Natural killer cell (primary cell): ENCODE measurements at regions of chr12 and their contacts with region 1.

Region 1: GRCh38 chr12:6688999-6689882 is at the start of gene ZNF384:
- DNase-seq: peak; percentile 89 to 98
- ATAC-seq: peak; percentile 76 to 93 (median 80)
- H3K4me3 ChIP-seq: peak within 1 kb of the TSS; percentile 63
- H3K4me3 Mint-ChIP-seq: peak within 1 kb of the TSS; percentile 92
- H3K27ac ChIP-seq: peak within 1 kb of the TSS; percentile 95
- H3K27ac Mint-ChIP-seq: peak within 1 kb of the TSS; percentile 93 to 96
- H3K4me1 ChIP-seq: peaks cover 22% of the 10 kb centered on the region
- H3K4me1 Mint-ChIP-seq: peaks cover 43 to 53% of the 10 kb centered on the region in 2 donors
- H3K27me3 ChIP-seq: no peaks in the 10 kb centered on the region
- H3K27me3 Mint-ChIP-seq: peaks cover 2 to 4% of the 10 kb centered on the region in 2 donors
- CTCF ChIP-seq: no peak
- total RNA-seq, gene ZNF384: 95.1 to 101 (median 100) TPM

Region 2: DNA sequence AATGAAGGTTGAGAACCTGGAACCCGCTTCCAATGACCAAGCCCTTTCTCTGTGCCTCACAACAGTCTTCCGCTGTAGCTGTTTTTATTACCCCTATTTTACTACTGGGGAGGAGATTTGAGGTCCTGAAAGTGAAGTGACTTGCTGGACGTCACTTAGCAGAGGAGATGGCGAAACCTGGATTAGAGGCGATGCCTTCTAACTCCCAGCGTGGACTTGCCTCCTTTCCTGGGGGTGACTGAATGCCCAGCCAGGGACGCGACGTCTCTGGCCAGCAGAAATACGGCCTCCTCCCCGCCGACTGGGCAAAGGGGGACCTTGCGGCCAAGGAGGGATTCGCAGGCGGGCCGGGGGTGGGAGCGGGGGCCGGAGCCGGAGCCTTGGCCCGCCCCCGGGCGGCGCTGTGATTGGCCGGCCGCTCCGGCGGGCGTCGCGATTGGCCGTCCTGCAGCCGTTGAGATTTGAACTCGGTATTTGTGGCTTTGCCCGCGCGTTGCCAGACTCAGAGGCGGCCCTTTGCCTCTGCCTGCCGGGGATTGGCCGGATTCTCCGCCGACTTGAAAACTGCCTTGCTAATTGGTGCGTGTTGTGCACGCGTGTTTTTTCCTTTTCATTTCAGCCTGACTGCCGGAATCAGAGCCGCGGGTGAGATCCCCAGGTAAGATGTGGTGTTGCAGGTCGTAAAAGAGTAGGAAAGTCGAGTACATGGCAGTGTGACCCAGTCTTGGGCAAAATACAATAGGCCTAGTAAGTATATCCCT is 195.6 kb before region 1 on chr12 and contains the start of gene NCAPD2:
- intact Hi-C with region 1: loop called (anchors 10 kb)
- DNase-seq: peak; percentile 90 to 97
- ATAC-seq: peak; percentile 85 to 94 (median 86)
- H3K4me3 ChIP-seq: peak within 1 kb of the TSS; percentile 81
- H3K4me3 Mint-ChIP-seq: peak within 1 kb of the TSS; percentile 94
- H3K27ac ChIP-seq: peak within 1 kb of the TSS; percentile 88
- H3K27ac Mint-ChIP-seq: peak within 1 kb of the TSS; percentile 97
- H3K4me1 ChIP-seq: peaks cover 22% of the 10 kb centered on the region
- H3K4me1 Mint-ChIP-seq: peaks cover 38% of the 10 kb centered on the region in 2 donors
- H3K27me3 ChIP-seq: no peaks in the 10 kb centered on the region
- H3K27me3 Mint-ChIP-seq: no peaks in the 10 kb centered on the region
- CTCF ChIP-seq: no peak
- total RNA-seq, gene NCAPD2: 38.8 to 53.1 (median 44.1) TPM

Region 3: DNA sequence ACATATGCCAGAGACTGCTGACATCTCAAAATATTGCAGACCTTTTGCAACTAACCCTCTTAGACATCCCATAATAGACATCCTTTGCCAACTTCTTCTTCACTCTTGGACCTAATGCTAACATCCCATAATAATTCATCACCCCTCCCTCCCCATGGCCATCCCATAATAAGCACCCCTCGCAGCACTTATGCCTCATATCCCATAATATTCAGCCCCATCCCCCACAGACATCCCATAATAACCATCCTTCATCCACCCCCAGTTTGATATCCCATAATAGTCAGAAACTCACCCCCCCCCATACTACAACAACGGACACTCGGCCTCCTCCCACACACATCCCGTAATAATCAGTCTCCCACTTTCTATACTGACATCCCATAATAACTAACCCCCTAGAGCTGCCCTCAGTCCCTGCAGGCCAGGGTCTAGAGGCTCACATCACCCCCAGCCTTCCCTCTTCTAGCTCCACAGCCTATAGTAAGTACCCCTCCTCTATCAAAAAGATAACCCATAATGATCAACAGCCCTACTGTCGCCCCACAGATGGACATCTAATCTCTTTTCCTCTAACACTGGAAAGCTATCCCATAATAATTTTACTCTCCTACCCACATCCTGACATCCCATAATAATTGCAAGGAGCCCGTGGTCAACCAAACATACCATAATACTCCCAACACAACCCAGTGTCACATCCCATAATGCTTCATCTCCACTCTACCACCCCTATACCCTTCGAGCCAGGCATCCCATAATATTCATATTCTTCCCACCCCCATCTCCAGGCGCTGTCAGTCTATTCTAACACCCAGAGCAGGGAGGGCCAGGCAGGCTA is 81.3 kb before region 1 on chr12:
- intact Hi-C with region 1: loop called (anchors 1 kb)
- DNase-seq: peak; percentile 49 to 87
- ATAC-seq: peak; percentile 43 to 69 (median 53)
- H3K4me3 ChIP-seq: no peak overlapping the region
- H3K4me3 Mint-ChIP-seq: no peak overlapping the region
- H3K27ac ChIP-seq: peak overlapping the region; percentile 97
- H3K27ac Mint-ChIP-seq: no peak overlapping the region
- H3K4me1 ChIP-seq: peaks cover 59% of the 10 kb centered on the region
- H3K4me1 Mint-ChIP-seq: peaks cover 40 to 53% of the 10 kb centered on the region in 2 donors
- H3K27me3 ChIP-seq: no peaks in the 10 kb centered on the region
- H3K27me3 Mint-ChIP-seq: no peaks in the 10 kb centered on the region
- CTCF ChIP-seq: no peak

Region 4: GRCh38 chr12:6632026-6632983 is 56.9 kb before region 1 on chr12:
- intact Hi-C with region 1: no loop called
- DNase-seq: peak; percentile 49 to 81
- ATAC-seq: peak; percentile 65 to 87 (median 76)
- H3K4me3 ChIP-seq: peak overlapping the region; percentile 24
- H3K4me3 Mint-ChIP-seq: peak overlapping the region; percentile 97
- H3K27ac ChIP-seq: peak overlapping the region; percentile 87
- H3K27ac Mint-ChIP-seq: peak overlapping the region; percentile 95 to 99
- H3K4me1 ChIP-seq: peaks cover 80% of the 10 kb centered on the region
- H3K4me1 Mint-ChIP-seq: peaks cover 62 to 69% of the 10 kb centered on the region in 2 donors
- H3K27me3 ChIP-seq: no peaks in the 10 kb centered on the region
- H3K27me3 Mint-ChIP-seq: no peaks in the 10 kb centered on the region
- CTCF ChIP-seq: no peak

Region 5: DNA sequence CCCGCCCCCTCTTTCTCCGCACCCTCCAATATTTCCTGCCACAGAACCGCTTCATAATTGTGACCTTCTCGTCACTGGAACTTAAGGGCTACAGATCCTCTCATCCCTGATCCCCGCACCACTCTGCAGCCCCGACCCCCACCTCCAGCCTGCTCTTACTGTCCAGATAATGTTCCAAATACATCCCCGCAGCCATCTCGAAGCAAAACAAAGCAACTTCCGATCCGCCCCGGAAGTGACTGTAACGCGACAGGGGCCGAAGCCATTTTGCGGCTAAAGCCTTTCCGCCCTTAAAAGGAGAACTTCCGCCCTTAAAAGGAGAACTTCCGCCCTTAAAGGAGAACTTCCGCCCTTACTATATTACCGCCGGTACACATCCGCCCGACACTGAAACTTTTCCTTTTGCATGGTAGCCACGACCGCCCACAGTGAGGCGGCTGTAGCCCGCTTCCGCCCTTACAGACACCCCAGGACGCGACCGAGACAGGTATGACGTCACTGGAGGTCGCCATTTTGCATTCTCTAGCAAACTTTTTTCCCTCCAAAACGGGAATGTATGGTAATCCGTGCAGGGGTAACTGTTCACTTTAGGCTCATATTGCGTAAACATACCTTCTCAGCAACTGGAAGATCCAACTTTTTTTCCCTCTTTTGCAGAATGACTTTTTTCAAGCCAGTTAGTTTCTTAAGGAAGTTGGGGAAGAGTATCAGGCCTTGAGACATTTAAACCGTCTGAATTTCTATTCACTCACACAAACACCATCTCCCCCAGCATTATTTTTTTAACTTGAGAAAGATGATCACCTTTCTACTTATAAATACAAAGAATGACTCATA is 26.1 kb before region 1 on chr12 and contains the start of gene ING4:
- intact Hi-C with region 1: loop called (anchors 1 kb)
- DNase-seq: peak; percentile 92 to 99
- ATAC-seq: peak; percentile 97 to 100 (median 98)
- H3K4me3 ChIP-seq: peak within 1 kb of the TSS; percentile 61
- H3K4me3 Mint-ChIP-seq: peak within 1 kb of the TSS; percentile 96
- H3K27ac ChIP-seq: peak within 1 kb of the TSS; percentile 86
- H3K27ac Mint-ChIP-seq: peak within 1 kb of the TSS; percentile 93 to 95
- H3K4me1 ChIP-seq: peaks cover 9% of the 10 kb centered on the region
- H3K4me1 Mint-ChIP-seq: peaks cover 27 to 38% of the 10 kb centered on the region in 2 donors
- H3K27me3 ChIP-seq: no peaks in the 10 kb centered on the region
- H3K27me3 Mint-ChIP-seq: no peaks in the 10 kb centered on the region
- CTCF ChIP-seq: no peak
- total RNA-seq, gene ING4: 29.9 to 40.9 (median 30.2) TPM

Region 6: GRCh38 chr12:6792522-6793201 is 103.4 kb after region 1 on chr12:
- intact Hi-C with region 1: no loop called
- DNase-seq: peak in 1 of 2 donors; percentile 73
- ATAC-seq: peak in 2 of 3 donors; percentile 59 to 68
- H3K4me3 ChIP-seq: no peak overlapping the region
- H3K4me3 Mint-ChIP-seq: peak overlapping the region; percentile 22
- H3K27ac ChIP-seq: no peak overlapping the region
- H3K27ac Mint-ChIP-seq: no peak overlapping the region
- H3K4me1 ChIP-seq: peaks cover 20% of the 10 kb centered on the region
- H3K4me1 Mint-ChIP-seq: peaks cover 0 to 21% of the 10 kb centered on the region in 2 donors
- H3K27me3 ChIP-seq: peaks cover 3% of the 10 kb centered on the region
- H3K27me3 Mint-ChIP-seq: peaks cover 40 to 61% of the 10 kb centered on the region in 2 donors
- CTCF ChIP-seq: no peak

Region 7: GRCh38 chr12:6851921-6852650 is 162.8 kb after region 1 on chr12 and contains the start of gene USP5:
- intact Hi-C with region 1: loop called (anchors 1 kb)
- DNase-seq: peak; percentile 96 to 99
- ATAC-seq: peak; percentile 79 to 92 (median 80)
- H3K4me3 ChIP-seq: peak within 1 kb of the TSS; percentile 76
- H3K4me3 Mint-ChIP-seq: peak within 1 kb of the TSS; percentile 91
- H3K27ac ChIP-seq: peak within 1 kb of the TSS; percentile 95
- H3K27ac Mint-ChIP-seq: peak within 1 kb of the TSS; percentile 95 to 99
- H3K4me1 ChIP-seq: peaks cover 22% of the 10 kb centered on the region
- H3K4me1 Mint-ChIP-seq: peaks cover 8 to 43% of the 10 kb centered on the region in 2 donors
- H3K27me3 ChIP-seq: no peaks in the 10 kb centered on the region
- H3K27me3 Mint-ChIP-seq: no peaks in the 10 kb centered on the region
- CTCF ChIP-seq: no peak
- total RNA-seq, gene USP5: 48.3 to 67.2 (median 57.2) TPM